ENCODE measurements at regions of chr19 and their contacts with region 1.

Region 1: GRCh38 chr19:15463861-15464371 is 428 bp downstream of the RASAL3 start:
- DNase-seq: peak in 2 of 5 donors; percentile 23 to 43
- ATAC-seq: peak in 2 of 4 donors; percentile 54 to 64
- H3K4me3 ChIP-seq: peak overlapping the region in 10 of 12 donors; percentile 24 to 72 (median 40)
- H3K27ac ChIP-seq: peak overlapping the region in 6 of 12 donors; percentile 39 to 92 (median 55)
- H3K4me1 ChIP-seq: peaks cover 0 to 36% (median 0%) of the 10 kb centered on the region in 12 donors
- H3K27me3 ChIP-seq: peaks cover 0 to 39% (median 6%) of the 10 kb centered on the region in 9 donors
- CTCF ChIP-seq: no peak
- POLR2A ChIP-seq: no peak

Region 2: GRCh38 chr19:15544970-15545369 is 81.1 kb after region 1 on chr19:
- intact Hi-C with region 1: loop called in 6 of 10 experiments (anchors 5 to 10 kb)
- DNase-seq: no peak
- ATAC-seq: no peak
- H3K4me3 ChIP-seq: no peak overlapping the region
- H3K27ac ChIP-seq: no peak overlapping the region
- H3K4me1 ChIP-seq: no peaks in the 10 kb centered on the region
- H3K27me3 ChIP-seq: peaks cover 0 to 29% (median 7%) of the 10 kb centered on the region in 9 donors
- CTCF ChIP-seq: no peak
- POLR2A ChIP-seq: no peak

Measured in heart left ventricle (tissue), 16 donors.